A673 (cell line): ENCODE measurements at regions of chr11 and their contacts with region 1.

Region 1: DNA sequence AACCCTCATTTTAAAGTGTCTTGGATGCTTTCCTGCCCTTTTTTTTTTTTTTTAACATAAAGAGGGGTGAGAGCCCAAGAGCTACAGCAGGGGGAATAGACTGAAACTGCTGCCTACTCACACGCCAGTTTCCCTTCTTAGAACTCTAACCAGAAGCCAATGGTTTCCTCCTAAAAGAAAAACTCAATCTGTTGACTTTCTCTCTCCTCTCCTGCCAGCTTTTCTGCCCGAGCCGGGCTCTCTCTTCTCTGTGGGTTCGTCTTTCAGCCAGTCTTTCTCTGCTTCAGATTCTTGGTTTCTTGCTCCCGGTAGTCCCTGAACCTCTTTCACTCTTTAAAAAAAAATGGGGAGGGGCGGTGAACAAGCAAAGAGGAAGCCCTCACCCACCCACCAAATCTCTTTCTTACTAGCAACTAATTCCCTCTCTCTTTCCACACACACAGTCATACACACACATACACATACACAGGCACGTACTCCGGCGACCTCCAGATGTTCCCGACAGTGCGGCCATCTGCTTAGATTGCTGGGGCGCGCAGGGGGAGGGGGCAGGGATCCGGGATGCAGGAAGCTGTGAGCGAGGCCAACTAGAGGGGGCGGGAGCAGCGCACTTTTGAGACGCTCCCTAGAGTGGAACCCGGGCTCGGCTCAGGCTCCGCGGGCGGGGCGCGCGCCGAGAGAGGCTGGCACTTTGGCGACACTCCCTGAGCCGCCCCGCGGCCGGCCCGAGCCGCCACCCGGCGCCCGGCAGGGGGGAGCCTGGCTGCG is 446 bp upstream of the TSKU start:
- DNase-seq: peak; percentile 99
- H3K4me3 ChIP-seq: peak overlapping the region; percentile 96
- H3K27ac ChIP-seq: peak overlapping the region; percentile 92
- H3K4me1 ChIP-seq: peaks cover 27% of the 10 kb centered on the region
- H3K27me3 ChIP-seq: no peaks in the 10 kb centered on the region
- CTCF ChIP-seq: no peak

Region 2: GRCh38 chr11:76744186-76745043 is 38.3 kb before region 1 on chr11:
- CTCF ChIA-PET with region 1: no interaction called
- POLR2A ChIA-PET with region 1: no interaction called
- intact Hi-C with region 1: loop called (anchors 5 kb)
- DNase-seq: no peak
- H3K4me3 ChIP-seq: no peak overlapping the region
- H3K27ac ChIP-seq: no peak overlapping the region
- H3K4me1 ChIP-seq: peaks cover 6% of the 10 kb centered on the region
- H3K27me3 ChIP-seq: no peaks in the 10 kb centered on the region
- CTCF ChIP-seq: no peak

Region 3: DNA sequence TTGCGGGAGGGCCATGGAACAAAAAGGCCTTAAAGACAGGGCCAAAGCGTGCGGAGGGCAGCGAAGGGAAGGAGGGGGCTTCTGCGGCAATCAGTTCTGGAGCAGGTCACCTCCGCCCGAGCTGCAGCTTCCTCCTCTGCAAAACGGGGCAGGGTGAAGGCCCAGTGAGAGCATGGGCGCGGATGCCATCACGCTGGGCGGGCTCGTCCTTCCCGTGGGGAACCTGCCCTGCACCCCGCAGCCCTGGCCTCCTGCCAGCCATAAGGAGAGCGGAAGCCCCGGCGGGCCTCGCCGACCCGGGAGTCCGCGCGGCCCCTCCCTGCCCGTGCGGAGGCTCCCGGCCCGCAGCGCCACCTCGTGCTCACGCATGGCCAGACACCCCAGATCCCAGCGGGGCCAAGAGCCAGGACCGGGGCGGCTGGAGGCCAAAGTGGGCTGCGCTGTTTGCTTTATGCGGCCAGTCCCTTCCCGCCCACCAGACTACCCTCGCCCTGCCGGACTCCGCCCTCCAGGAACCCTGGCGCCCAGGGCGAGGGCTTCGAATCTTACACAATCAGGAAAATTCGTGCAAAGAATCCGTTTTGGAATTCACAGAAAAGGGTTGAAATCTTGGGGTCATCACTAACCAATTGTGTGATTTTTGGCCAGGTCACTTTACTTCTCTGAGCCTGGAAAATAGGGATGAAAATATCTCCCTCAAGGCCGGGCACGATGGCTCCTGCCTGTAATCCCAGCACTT is 16.5 kb after region 1 on chr11:
- CTCF ChIA-PET with region 1: no interaction called
- POLR2A ChIA-PET with region 1: interaction called, 4 read pairs
- intact Hi-C with region 1: loop called (anchors 1 kb)
- DNase-seq: peak; percentile 84
- H3K4me3 ChIP-seq: peak overlapping the region; percentile 23
- H3K27ac ChIP-seq: no peak overlapping the region
- H3K4me1 ChIP-seq: peaks cover 18% of the 10 kb centered on the region
- H3K27me3 ChIP-seq: no peaks in the 10 kb centered on the region
- CTCF ChIP-seq: peak; percentile 95

Region 4: GRCh38 chr11:76955459-76956114 is 172.9 kb after region 1 on chr11:
- CTCF ChIA-PET with region 1: no interaction called
- POLR2A ChIA-PET with region 1: no interaction called
- intact Hi-C with region 1: no loop called
- DNase-seq: no peak
- H3K4me3 ChIP-seq: no peak overlapping the region
- H3K27ac ChIP-seq: no peak overlapping the region
- H3K4me1 ChIP-seq: no peaks in the 10 kb centered on the region
- H3K27me3 ChIP-seq: no peaks in the 10 kb centered on the region
- CTCF ChIP-seq: no peak